Naive thymus-derived CD4-positive, alpha-beta T cell (primary cell): ENCODE measurements at regions of chr7 and their contacts with region 1.

Region 1: GRCh38 chr7:130069978-130070860 is at the start of gene KLHDC10:
- DNase-seq: peak; percentile 84 to 98 (median 96)
- ATAC-seq: peak; percentile 99
- H3K4me3 ChIP-seq: peak within 1 kb of the TSS; percentile 54
- H3K4me3 Mint-ChIP-seq: peak within 1 kb of the TSS; percentile 80 to 95 (median 92)
- H3K27ac ChIP-seq: peak within 1 kb of the TSS; percentile 82
- H3K27ac Mint-ChIP-seq: peak within 1 kb of the TSS; percentile 81 to 97 (median 90)
- H3K4me1 ChIP-seq: peaks cover 12 to 18% of the 10 kb centered on the region in 2 donors
- H3K4me1 Mint-ChIP-seq: peaks cover 34 to 51% (median 42%) of the 10 kb centered on the region in 7 donors
- H3K27me3 ChIP-seq: no peaks in the 10 kb centered on the region
- H3K27me3 Mint-ChIP-seq: peaks cover 0 to 2% (median 0%) of the 10 kb centered on the region in 5 donors
- total RNA-seq, gene KLHDC10: 14.5 to 20.4 (median 17.3) TPM

Region 2: GRCh38 chr7:129356176-129356575 is 714.0 kb before region 1 on chr7:
- CTCF ChIA-PET with region 1: no interaction called
- POLR2A ChIA-PET with region 1: no interaction called
- intact Hi-C with region 1: no loop called
- DNase-seq: no peak
- ATAC-seq: no peak
- H3K4me3 ChIP-seq: no peak overlapping the region
- H3K4me3 Mint-ChIP-seq: no peak overlapping the region
- H3K27ac ChIP-seq: no peak overlapping the region
- H3K27ac Mint-ChIP-seq: no peak overlapping the region
- H3K4me1 ChIP-seq: no peaks in the 10 kb centered on the region
- H3K4me1 Mint-ChIP-seq: peaks cover 0 to 7% (median 0%) of the 10 kb centered on the region in 7 donors
- H3K27me3 ChIP-seq: no peaks in the 10 kb centered on the region
- H3K27me3 Mint-ChIP-seq: peaks cover 0 to 2% (median 0%) of the 10 kb centered on the region in 5 donors

Region 3: DNA sequence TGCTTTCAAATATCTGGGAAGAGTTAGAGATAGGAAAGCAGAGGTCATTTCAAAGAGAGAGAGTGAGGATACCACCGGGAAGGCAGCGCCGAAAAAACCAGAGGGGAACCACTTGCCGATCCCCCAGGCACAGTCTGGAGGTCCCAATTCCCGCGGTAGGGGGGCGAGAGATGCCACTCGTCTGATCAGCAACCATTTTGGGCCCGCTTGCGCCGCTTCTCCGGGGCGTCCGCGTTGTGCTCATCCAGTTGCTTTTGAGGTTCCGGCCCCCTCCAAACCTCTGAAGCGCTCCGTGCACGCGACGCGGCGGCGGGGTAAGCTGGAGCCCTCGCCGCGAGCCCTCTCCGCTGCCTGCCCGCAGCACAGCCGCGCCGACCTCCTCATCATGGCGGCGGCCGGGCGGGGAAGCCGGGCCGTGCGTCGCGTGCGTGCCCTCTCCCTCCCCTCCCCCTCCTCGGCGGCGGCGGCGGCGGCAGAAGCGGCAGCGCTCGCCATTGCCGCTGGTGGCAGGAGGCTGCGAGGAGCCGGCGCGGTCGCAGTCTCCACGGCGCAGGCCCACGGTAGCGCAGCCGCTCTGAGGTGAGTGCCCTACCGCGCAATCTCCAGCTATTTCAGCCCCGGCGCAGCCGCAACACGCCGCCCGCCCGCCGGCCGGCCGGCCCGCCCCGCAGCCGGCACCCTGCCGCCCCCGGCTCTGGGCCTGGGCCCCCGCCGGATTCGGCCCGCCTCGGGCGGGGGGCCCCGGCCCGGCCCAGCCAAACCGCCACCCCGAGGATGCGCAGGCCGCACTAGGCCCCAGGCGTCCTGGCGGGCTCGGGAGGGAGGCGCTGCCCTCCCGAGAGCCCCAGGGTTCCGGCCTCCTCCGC is 458.7 kb before region 1 on chr7 and contains the start of gene NRF1:
- CTCF ChIA-PET with region 1: no interaction called
- POLR2A ChIA-PET with region 1: no interaction called
- intact Hi-C with region 1: loop called in 1 of 2 experiments (anchors 1 kb)
- DNase-seq: peak; percentile 89 to 97 (median 94)
- ATAC-seq: peak; percentile 92
- H3K4me3 ChIP-seq: peak within 1 kb of the TSS; percentile 87
- H3K4me3 Mint-ChIP-seq: peak within 1 kb of the TSS; percentile 88 to 99 (median 96)
- H3K27ac ChIP-seq: peak within 1 kb of the TSS; percentile 82
- H3K27ac Mint-ChIP-seq: peak within 1 kb of the TSS; percentile 92 to 99 (median 96)
- H3K4me1 ChIP-seq: peaks cover 24 to 38% of the 10 kb centered on the region in 2 donors
- H3K4me1 Mint-ChIP-seq: peaks cover 37 to 79% (median 67%) of the 10 kb centered on the region in 7 donors
- H3K27me3 ChIP-seq: no peaks in the 10 kb centered on the region
- H3K27me3 Mint-ChIP-seq: no peaks in the 10 kb centered on the region
- total RNA-seq, gene NRF1: 25.8 to 49.3 (median 35.3) TPM

Region 4: GRCh38 chr7:130102588-130102987 is 32.4 kb after region 1 on chr7:
- CTCF ChIA-PET with region 1: no interaction called
- POLR2A ChIA-PET with region 1: no interaction called
- intact Hi-C with region 1: no loop called
- DNase-seq: no peak
- ATAC-seq: no peak
- H3K4me3 ChIP-seq: no peak overlapping the region
- H3K4me3 Mint-ChIP-seq: no peak overlapping the region
- H3K27ac ChIP-seq: no peak overlapping the region
- H3K27ac Mint-ChIP-seq: no peak overlapping the region
- H3K4me1 ChIP-seq: no peaks in the 10 kb centered on the region
- H3K4me1 Mint-ChIP-seq: peaks cover 0 to 5% (median 4%) of the 10 kb centered on the region in 7 donors
- H3K27me3 ChIP-seq: no peaks in the 10 kb centered on the region
- H3K27me3 Mint-ChIP-seq: no peaks in the 10 kb centered on the region

Region 5: DNA sequence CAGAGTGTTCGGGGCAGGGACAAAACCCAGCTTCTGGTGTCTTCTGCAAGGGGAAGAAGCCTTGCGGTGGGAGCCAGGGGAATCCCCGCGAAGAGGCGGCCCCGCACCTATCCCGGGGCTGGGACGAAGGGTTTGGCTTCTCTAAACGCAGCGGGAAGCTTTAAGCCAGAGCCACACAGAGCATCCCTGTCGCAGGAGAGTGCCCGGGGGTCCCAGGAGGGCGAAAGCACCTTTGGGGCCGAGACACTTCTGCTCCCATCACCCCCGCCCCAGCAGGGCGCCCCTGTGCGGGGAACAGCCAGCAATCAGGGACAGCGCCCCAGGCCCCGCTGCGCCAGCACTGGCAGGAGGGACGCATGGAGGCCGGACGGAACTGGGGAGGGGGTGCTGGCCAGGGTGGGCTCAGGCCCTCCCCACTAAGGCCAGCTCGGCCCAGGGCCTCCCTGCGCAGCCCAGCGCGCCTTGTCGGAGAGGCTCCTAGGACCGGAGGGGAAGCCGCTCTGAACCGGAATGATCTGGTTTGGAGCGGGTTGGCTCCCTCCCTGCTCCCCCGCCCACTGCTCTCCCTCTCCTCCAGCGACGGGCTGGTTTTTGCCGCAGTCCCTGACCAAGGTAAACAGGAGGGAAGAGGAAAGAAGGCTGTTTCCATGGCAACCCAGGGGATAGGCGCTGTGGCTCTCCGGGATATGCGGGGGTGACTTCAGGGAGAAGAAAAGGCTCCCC is 71.1 kb after region 1 on chr7:
- CTCF ChIA-PET with region 1: no interaction called
- POLR2A ChIA-PET with region 1: no interaction called
- intact Hi-C with region 1: loop called in 1 of 2 experiments (anchors 1 kb)
- DNase-seq: peak in 8 of 9 donors; percentile 28 to 67 (median 56)
- ATAC-seq: peak; percentile 64
- H3K4me3 ChIP-seq: peak overlapping the region; percentile 79
- H3K4me3 Mint-ChIP-seq: peak overlapping the region; percentile 71 to 90 (median 85)
- H3K27ac ChIP-seq: peak overlapping the region; percentile 87
- H3K27ac Mint-ChIP-seq: peak overlapping the region; percentile 46 to 87 (median 83)
- H3K4me1 ChIP-seq: peaks cover 0 to 13% of the 10 kb centered on the region in 2 donors
- H3K4me1 Mint-ChIP-seq: peaks cover 6 to 35% (median 13%) of the 10 kb centered on the region in 7 donors
- H3K27me3 ChIP-seq: no peaks in the 10 kb centered on the region
- H3K27me3 Mint-ChIP-seq: peaks cover 0 to 17% (median 0%) of the 10 kb centered on the region in 5 donors

Region 6: DNA sequence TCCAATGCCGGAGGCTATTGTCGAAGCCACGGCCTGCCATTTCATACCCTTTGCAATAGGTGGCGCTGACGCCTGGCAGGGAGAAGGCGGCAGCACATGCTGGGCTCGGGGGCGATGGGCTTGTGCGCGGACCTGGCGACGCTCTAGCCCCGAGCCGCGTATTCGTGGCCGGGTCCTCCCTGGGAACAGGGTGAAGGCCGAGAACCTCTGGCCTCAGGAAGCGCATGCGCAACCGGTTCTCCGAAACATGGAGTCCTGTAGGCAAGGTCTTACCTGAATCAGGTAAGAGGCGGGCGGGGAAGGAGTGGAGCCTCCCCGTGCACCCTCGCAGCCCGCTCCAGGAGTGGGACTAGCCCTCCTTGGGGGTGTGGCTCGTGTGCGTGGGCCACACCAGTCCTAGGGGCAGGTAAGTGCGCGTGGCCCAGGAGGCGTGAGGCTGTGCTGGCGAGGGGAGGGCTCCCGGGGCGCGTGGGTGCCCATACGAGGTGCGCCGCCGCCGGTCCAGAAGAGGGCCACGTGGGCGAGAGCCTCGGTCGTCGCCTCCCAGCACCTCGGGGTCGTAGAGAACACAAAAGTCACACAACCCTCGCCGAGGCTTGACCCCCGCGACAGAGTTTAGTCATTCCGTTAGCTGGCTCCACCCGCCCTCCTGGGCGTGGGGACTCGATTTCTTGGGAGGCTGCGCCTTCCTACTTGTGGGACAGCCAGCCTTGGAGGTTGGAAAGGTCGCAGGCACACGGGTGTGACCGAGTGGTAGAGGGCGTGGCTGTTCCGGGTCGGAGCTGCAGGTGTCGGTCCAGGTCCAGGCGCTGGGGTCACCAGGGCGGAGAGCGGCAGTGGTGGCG is 416.1 kb after region 1 on chr7:
- CTCF ChIA-PET with region 1: no interaction called
- POLR2A ChIA-PET with region 1: no interaction called
- intact Hi-C with region 1: loop called (anchors 1 to 5 kb)
- DNase-seq: peak; percentile 34 to 73 (median 56)
- ATAC-seq: peak; percentile 88
- H3K4me3 ChIP-seq: peak overlapping the region; percentile 80
- H3K4me3 Mint-ChIP-seq: peak overlapping the region; percentile 85 to 94 (median 91)
- H3K27ac ChIP-seq: peak overlapping the region; percentile 41
- H3K27ac Mint-ChIP-seq: peak overlapping the region in 5 of 9 donors; percentile 58 to 88 (median 73)
- H3K4me1 ChIP-seq: peaks cover 7 to 9% of the 10 kb centered on the region in 2 donors
- H3K4me1 Mint-ChIP-seq: peaks cover 22 to 32% (median 25%) of the 10 kb centered on the region in 7 donors
- H3K27me3 ChIP-seq: no peaks in the 10 kb centered on the region
- H3K27me3 Mint-ChIP-seq: peaks cover 5 to 66% (median 31%) of the 10 kb centered on the region in 5 donors

Region 7: DNA sequence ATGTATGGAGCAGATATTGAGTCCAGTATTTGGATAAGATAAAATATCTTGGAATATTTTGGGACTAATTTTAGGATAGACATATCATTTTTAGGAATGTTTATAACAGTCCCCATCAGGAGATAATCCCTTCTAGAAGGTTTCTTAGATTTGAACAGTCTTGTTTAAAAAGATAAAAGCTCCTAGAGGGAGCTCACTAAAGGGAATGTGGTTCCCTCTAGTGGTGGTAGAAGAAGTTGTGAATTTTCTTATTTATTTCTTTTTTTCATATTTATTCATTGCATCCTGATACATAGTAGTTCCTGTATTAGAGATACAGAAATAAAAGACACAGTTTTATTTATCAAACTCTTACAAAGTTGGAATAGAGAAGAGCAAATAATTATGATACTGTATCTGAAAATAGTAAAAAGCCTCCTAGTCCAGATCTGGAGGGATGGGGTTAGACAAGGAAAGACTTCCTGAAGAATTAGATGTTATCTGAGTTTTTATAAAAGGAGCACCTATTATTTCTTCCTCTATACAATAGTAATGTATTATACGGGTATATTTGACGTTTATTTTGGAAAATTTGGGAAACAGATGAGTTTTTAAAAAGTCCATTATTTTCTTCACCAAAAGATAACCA is 688.3 kb after region 1 on chr7:
- CTCF ChIA-PET with region 1: interaction called, 13 read pairs
- POLR2A ChIA-PET with region 1: interaction called, 3 read pairs
- intact Hi-C with region 1: loop called (anchors 1 kb)
- DNase-seq: peak in 6 of 9 donors; percentile 27 to 53 (median 43)
- ATAC-seq: peak; percentile 66
- H3K4me3 ChIP-seq: no peak overlapping the region
- H3K4me3 Mint-ChIP-seq: no peak overlapping the region
- H3K27ac ChIP-seq: no peak overlapping the region
- H3K27ac Mint-ChIP-seq: no peak overlapping the region
- H3K4me1 ChIP-seq: no peaks in the 10 kb centered on the region
- H3K4me1 Mint-ChIP-seq: peaks cover 0 to 2% (median 0%) of the 10 kb centered on the region in 7 donors
- H3K27me3 ChIP-seq: no peaks in the 10 kb centered on the region
- H3K27me3 Mint-ChIP-seq: peaks cover 0 to 13% (median 4%) of the 10 kb centered on the region in 5 donors